Naive thymus-derived CD4-positive, alpha-beta T cell (primary cell): ENCODE measurements at regions of chr10 and their contacts with region 1.

Region 1: DNA sequence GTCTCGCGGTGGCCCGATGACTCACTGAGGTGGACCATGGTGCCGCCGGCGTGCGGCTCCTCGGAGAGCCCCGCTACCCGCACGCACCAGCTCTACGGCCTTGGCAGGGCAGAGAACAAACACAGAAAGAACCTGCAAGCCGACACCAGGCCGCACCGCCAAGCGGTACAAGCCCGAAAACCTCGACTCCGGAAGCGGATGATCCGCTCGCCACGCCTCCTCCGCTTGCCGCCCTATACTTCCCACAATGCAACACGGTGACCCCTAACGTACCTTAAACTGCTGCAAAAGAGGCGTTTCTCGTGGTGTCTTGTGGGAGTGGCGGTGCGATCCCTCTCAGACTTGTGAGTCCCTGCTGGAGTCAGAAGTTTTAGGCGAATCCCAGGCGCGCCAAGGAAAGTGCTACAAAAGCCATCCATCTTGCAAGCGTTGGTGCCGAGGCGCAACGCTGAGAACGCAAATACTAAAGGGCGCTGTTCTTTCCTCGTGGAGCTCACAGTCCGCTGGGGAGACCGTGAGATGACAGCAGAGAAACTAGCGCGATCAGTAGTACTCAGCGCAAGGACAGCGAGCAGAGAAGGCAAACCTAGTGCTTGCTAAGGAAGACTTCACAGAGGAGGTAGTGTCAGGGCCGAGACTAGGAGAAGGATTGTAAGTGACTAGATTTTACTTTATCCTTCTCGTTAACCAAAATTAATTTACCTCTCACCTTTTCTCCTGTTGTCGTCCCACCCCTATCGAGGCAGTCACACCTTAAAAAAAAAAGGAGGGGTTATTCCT is at the start of gene MRPS16:
- DNase-seq: peak; percentile 75 to 95 (median 93)
- ATAC-seq: peak; percentile 98
- H3K4me3 ChIP-seq: peak within 1 kb of the TSS; percentile 94
- H3K4me3 Mint-ChIP-seq: peak within 1 kb of the TSS; percentile 95 to 100 (median 99)
- H3K27ac ChIP-seq: peak within 1 kb of the TSS; percentile 92
- H3K27ac Mint-ChIP-seq: peak within 1 kb of the TSS; percentile 91 to 97 (median 94)
- H3K4me1 ChIP-seq: peaks cover 18 to 26% of the 10 kb centered on the region in 2 donors
- H3K4me1 Mint-ChIP-seq: peaks cover 19 to 50% (median 37%) of the 10 kb centered on the region in 7 donors
- H3K27me3 ChIP-seq: no peaks in the 10 kb centered on the region
- H3K27me3 Mint-ChIP-seq: peaks cover 0 to 2% (median 0%) of the 10 kb centered on the region in 5 donors
- total RNA-seq, gene MRPS16: 29.6 to 99.9 (median 47.6) TPM

Region 2: DNA sequence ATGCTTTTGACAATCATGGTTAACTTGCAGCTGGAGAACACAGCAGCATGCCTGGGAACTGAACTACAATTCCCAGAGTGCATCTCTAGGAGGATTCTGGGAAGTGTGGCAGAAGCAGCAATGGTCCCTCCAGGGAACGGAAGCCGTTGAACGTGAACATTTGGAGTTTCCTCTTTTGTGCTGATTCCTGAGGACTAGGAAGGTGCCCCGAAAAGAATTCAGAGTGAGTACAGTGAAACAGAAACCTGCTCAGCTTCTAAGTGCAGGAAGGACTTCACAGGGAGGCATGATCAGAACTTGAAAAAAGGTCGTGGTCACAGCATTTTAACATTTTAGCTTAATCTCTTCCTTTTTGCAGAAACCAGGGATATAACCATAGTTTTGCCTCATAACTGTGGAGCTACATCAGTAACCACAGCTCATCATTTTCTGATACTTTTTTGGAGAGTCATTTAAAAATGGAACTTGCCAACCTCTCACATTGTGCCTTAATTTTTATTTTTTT is 142.2 kb before region 1 on chr10 and contains the start of gene NUDT13:
- CTCF ChIA-PET with region 1: no interaction called
- POLR2A ChIA-PET with region 1: interaction called, 3 read pairs
- intact Hi-C with region 1: loop called in 1 of 2 experiments (anchors 5 kb)
- DNase-seq: peak in 8 of 9 donors; percentile 30 to 59 (median 47)
- ATAC-seq: peak; percentile 96
- H3K4me3 ChIP-seq: peak within 1 kb of the TSS; percentile 55
- H3K4me3 Mint-ChIP-seq: peak within 1 kb of the TSS; percentile 76 to 96 (median 94)
- H3K27ac ChIP-seq: peak within 1 kb of the TSS; percentile 71
- H3K27ac Mint-ChIP-seq: peak within 1 kb of the TSS; percentile 78 to 95 (median 90)
- H3K4me1 ChIP-seq: no peaks in the 10 kb centered on the region
- H3K4me1 Mint-ChIP-seq: peaks cover 3 to 17% (median 14%) of the 10 kb centered on the region in 7 donors
- H3K27me3 ChIP-seq: no peaks in the 10 kb centered on the region
- H3K27me3 Mint-ChIP-seq: no peaks in the 10 kb centered on the region
- total RNA-seq, gene NUDT13: 1.2 to 3.5 (median 1.5) TPM

Region 3: DNA sequence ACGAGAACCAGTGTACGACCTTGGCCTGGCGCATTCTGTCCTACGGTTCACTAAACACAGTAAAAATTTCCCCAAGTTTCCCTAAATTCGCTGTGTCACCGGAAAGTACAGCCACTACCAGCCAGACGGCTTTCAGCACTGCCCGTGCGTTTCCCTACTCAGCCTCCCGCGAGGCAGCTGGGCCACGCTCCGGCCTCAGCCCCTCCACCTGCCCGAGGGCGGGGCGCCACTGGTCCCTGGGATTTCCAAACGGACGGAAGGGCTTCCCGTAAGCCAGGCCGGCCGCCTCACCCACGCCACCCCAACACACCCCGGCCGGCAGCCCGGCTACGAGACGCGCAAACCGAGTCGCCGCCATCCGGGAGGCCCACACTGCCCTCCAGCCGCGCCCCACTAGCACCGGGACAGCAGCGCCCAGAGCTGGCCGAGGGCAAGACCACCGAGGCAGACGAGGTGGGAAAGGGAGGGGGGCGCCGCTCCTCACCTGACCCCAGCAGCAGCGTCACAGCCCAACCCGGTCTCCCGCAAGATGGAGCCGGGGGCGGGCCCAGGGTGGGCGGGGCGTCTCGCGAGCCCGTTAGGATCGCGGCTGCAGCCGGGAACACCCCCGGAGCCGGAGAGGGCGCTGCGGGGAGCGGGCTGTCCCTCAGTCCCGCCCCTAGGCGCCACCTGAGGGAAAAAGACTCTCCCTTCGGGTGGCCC is 161.0 kb after region 1 on chr10 and contains the start of gene ANXA7:
- CTCF ChIA-PET with region 1: no interaction called
- POLR2A ChIA-PET with region 1: interaction called, 4 read pairs
- intact Hi-C with region 1: loop called (anchors 1 kb)
- DNase-seq: peak; percentile 78 to 93 (median 85)
- ATAC-seq: peak; percentile 99
- H3K4me3 ChIP-seq: peak within 1 kb of the TSS; percentile 78
- H3K4me3 Mint-ChIP-seq: peak within 1 kb of the TSS; percentile 82 to 97 (median 94)
- H3K27ac ChIP-seq: peak within 1 kb of the TSS; percentile 98
- H3K27ac Mint-ChIP-seq: peak within 1 kb of the TSS; percentile 83 to 95 (median 90)
- H3K4me1 ChIP-seq: peaks cover 8 to 16% of the 10 kb centered on the region in 2 donors
- H3K4me1 Mint-ChIP-seq: peaks cover 39 to 60% (median 53%) of the 10 kb centered on the region in 7 donors
- H3K27me3 ChIP-seq: no peaks in the 10 kb centered on the region
- H3K27me3 Mint-ChIP-seq: peaks cover 0 to 4% (median 0%) of the 10 kb centered on the region in 5 donors
- total RNA-seq, gene ANXA7: 74.8 to 118 (median 97.3) TPM

Region 4: DNA sequence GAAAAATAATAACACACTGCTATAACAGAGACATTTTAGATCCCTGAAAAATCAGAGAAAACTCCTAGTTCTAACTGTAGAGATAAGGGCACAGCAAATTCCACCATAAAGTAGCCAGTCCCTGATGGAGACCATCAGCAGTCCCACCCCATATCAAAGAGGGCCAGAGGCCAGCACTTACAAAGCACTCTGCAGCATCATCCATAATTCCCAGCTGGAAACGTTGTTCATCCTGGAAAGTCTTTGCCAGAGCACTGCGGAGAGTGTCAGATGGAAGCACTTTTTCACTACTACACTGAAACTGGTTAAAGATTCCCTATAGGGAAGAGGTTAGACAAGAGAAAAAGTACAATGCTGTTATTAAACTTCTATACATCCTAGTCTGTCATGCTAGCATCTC is 292.7 kb after region 1 on chr10:
- CTCF ChIA-PET with region 1: no interaction called
- POLR2A ChIA-PET with region 1: no interaction called
- intact Hi-C with region 1: no loop called
- DNase-seq: no peak
- ATAC-seq: no peak
- H3K4me3 ChIP-seq: no peak overlapping the region
- H3K4me3 Mint-ChIP-seq: no peak overlapping the region
- H3K27ac ChIP-seq: no peak overlapping the region
- H3K27ac Mint-ChIP-seq: no peak overlapping the region
- H3K4me1 ChIP-seq: no peaks in the 10 kb centered on the region
- H3K4me1 Mint-ChIP-seq: no peaks in the 10 kb centered on the region
- H3K27me3 ChIP-seq: no peaks in the 10 kb centered on the region
- H3K27me3 Mint-ChIP-seq: peaks cover 0 to 4% (median 0%) of the 10 kb centered on the region in 5 donors